CD8-positive, alpha-beta memory T cell (primary cell): ENCODE measurements at regions of chr4 and their contacts with region 1.

Region 1: GRCh38 chr4:165131247-165131832 is 18.7 kb upstream of the TMEM192 start:
- DNase-seq: peak; percentile 48 to 78 (median 65)
- H3K4me3 ChIP-seq: no peak overlapping the region
- H3K4me3 Mint-ChIP-seq: no peak overlapping the region
- H3K27ac ChIP-seq: no peak overlapping the region
- H3K27ac Mint-ChIP-seq: no peak overlapping the region
- H3K4me1 ChIP-seq: no peaks in the 10 kb centered on the region
- H3K4me1 Mint-ChIP-seq: peaks cover 0 to 1% (median 0%) of the 10 kb centered on the region in 3 donors
- H3K27me3 ChIP-seq: no peaks in the 10 kb centered on the region
- H3K27me3 Mint-ChIP-seq: peaks cover 7 to 61% of the 10 kb centered on the region in 2 donors

Region 2: DNA sequence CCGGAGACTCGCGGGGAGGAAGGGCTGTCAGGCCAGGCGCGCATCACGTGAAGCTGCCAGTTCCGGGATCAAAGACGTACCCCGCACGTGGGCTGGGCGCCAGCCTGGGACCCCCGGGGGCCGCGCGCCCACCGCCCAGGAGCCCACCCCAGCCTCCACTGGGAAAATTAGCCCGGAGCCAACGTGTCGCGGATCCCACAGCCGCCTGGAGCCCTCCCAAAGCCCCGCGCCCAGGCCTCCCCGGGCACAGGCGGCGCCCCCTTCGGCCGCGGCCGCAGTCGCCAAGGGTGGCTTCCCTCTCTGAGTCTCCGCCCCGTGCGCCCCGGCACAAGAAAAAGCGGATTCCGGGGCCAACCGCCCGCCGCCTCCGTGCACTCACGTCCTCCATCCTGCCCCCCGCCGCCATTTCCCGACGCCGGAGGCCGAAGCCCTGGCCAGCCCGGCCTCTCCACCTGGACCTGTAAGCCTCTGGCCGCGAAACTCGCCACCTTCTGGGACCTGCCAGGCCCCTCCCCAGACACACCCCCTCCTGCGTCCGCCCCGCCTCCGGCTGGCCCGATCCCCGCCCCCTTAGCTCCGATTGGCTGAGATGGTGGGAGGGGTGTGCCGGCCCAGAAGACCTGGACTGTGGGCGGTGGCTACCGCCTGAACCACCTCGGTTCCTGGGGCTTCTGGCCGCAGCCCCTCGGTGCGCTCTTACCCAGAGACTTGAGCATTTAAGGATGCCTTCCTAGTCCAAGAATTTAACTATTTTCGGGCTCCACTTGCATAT is 18.8 kb before region 1 on chr4 and contains the start of gene TMEM192:
- CTCF ChIA-PET with region 1: interaction called, 17 read pairs
- POLR2A ChIA-PET with region 1: no interaction called
- DNase-seq: peak; percentile 90 to 93 (median 92)
- H3K4me3 ChIP-seq: peak within 1 kb of the TSS; percentile 55
- H3K4me3 Mint-ChIP-seq: peak within 1 kb of the TSS; percentile 88 to 99 (median 94)
- H3K27ac ChIP-seq: peak within 1 kb of the TSS; percentile 66
- H3K27ac Mint-ChIP-seq: peak within 1 kb of the TSS; percentile 65 to 98 (median 95)
- H3K4me1 ChIP-seq: peaks cover 12% of the 10 kb centered on the region
- H3K4me1 Mint-ChIP-seq: peaks cover 17 to 33% (median 23%) of the 10 kb centered on the region in 3 donors
- H3K27me3 ChIP-seq: no peaks in the 10 kb centered on the region
- H3K27me3 Mint-ChIP-seq: peaks cover 2 to 12% of the 10 kb centered on the region in 2 donors
- total RNA-seq, gene TMEM192: 18.1 to 20.8 TPM

Region 3: GRCh38 chr4:165118256-165118909 is 13.0 kb before region 1 on chr4:
- CTCF ChIA-PET with region 1: interaction called, 16 read pairs
- POLR2A ChIA-PET with region 1: no interaction called
- DNase-seq: no peak
- H3K4me3 ChIP-seq: no peak overlapping the region
- H3K4me3 Mint-ChIP-seq: no peak overlapping the region
- H3K27ac ChIP-seq: no peak overlapping the region
- H3K27ac Mint-ChIP-seq: no peak overlapping the region
- H3K4me1 ChIP-seq: peaks cover 2% of the 10 kb centered on the region
- H3K4me1 Mint-ChIP-seq: peaks cover 2 to 6% (median 2%) of the 10 kb centered on the region in 3 donors
- H3K27me3 ChIP-seq: no peaks in the 10 kb centered on the region
- H3K27me3 Mint-ChIP-seq: peaks cover 7 to 26% of the 10 kb centered on the region in 2 donors

Region 4: DNA sequence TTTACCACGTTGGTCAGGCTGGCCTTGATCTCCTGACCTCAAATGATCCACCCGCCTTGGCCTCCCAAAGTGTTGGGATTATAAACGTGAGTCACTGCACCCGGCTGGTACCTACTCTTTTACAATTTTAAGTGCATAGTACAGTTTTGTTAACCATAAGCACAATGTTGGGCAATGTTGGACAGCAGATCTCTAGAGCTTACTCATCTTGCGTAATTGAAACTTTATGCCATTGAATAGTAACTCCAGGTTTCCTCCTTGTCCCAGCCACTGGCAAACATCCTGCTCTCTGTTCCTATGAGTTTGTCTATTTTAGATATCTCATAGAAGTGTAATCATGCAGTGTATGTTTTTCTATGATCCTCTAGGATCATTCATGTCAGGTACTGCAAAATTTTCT is 238.2 kb after region 1 on chr4:
- CTCF ChIA-PET with region 1: no interaction called
- POLR2A ChIA-PET with region 1: no interaction called
- DNase-seq: no peak
- H3K4me3 ChIP-seq: no peak overlapping the region
- H3K4me3 Mint-ChIP-seq: no peak overlapping the region
- H3K27ac ChIP-seq: no peak overlapping the region
- H3K27ac Mint-ChIP-seq: no peak overlapping the region
- H3K4me1 ChIP-seq: no peaks in the 10 kb centered on the region
- H3K4me1 Mint-ChIP-seq: no peaks in the 10 kb centered on the region
- H3K27me3 ChIP-seq: no peaks in the 10 kb centered on the region
- H3K27me3 Mint-ChIP-seq: peaks cover 0 to 8% of the 10 kb centered on the region in 2 donors

Region 5: DNA sequence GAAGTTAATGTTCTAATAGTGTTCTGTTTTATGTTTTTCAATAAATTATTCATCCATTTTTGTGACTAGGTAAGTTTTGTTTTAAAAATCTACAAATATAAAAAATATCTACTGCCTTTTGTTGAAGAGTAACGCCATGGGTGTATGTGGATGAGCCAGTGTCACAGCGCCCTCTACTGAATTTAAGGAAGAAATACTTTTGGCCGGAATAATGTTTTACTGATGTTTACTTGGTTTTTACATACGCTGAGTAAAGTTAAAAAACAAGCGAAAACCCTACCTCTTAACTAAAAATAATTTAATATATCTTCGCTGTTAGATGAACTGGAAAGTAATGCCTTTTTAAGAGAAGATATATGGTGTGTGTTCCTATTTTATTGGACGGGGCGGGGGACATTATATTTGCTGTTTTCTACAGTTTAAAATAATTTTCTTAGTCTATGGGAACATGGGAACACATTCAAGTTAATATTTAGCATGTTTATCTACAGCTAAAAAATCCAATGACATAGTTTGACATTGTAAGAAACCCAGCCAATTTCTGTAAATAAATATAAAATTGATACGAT is 333.6 kb after region 1 on chr4:
- CTCF ChIA-PET with region 1: interaction called, 15 read pairs
- POLR2A ChIA-PET with region 1: no interaction called
- DNase-seq: peak in 2 of 5 donors; percentile 21 to 45
- H3K4me3 ChIP-seq: no peak overlapping the region
- H3K4me3 Mint-ChIP-seq: no peak overlapping the region
- H3K27ac ChIP-seq: no peak overlapping the region
- H3K27ac Mint-ChIP-seq: no peak overlapping the region
- H3K4me1 ChIP-seq: no peaks in the 10 kb centered on the region
- H3K4me1 Mint-ChIP-seq: no peaks in the 10 kb centered on the region
- H3K27me3 ChIP-seq: no peaks in the 10 kb centered on the region
- H3K27me3 Mint-ChIP-seq: peaks cover 3 to 7% of the 10 kb centered on the region in 2 donors

Region 6: DNA sequence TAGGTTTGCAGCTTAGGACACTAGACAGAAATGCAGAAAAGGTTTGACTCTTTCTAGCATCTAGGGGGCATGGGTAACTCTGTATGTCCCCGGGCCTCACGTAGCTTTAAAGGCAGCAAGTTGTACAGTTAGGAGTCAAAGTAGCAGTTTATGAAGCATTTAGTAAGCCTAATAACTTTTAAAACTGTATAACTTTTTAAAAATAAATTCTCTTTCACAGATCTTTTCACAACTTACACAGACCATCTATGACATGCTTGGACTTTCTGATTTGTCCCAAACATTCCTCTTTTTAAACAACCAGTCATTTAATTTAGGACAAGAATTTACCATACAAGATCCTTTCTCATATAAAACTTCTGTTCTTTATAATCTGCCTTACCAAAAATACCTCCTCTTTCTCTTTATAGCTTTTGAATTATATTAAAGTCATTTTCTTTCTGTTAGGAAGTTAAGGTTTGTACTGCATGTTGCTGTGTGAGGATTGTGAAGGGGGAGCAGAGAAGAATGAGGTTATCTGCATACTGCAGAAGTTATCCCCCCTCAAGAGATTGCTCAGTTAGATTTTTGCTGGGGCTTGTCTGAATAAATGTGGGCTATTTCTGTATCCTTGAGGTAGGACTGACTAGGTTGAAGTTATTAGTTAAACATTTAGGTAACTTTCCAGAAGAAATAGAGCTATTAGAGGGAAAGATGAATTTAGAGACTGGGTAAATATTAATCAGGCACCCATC is 341.8 kb after region 1 on chr4:
- CTCF ChIA-PET with region 1: interaction called, 13 read pairs
- POLR2A ChIA-PET with region 1: no interaction called
- DNase-seq: no peak
- H3K4me3 ChIP-seq: no peak overlapping the region
- H3K4me3 Mint-ChIP-seq: no peak overlapping the region
- H3K27ac ChIP-seq: no peak overlapping the region
- H3K27ac Mint-ChIP-seq: no peak overlapping the region
- H3K4me1 ChIP-seq: no peaks in the 10 kb centered on the region
- H3K4me1 Mint-ChIP-seq: no peaks in the 10 kb centered on the region
- H3K27me3 ChIP-seq: no peaks in the 10 kb centered on the region
- H3K27me3 Mint-ChIP-seq: peaks cover 11% of the 10 kb centered on the region in 2 donors